ENCODE measurements at regions of chr17 and their contacts with region 1.

Region 1: GRCh38 chr17:38729886-38730525 is at the start of gene CISD3:
- DNase-seq: peak; percentile 61 to 95 (median 83)
- ATAC-seq: peak; percentile 74
- H3K4me3 ChIP-seq: peak within 1 kb of the TSS; percentile 74 to 80
- H3K4me3 Mint-ChIP-seq: peak within 1 kb of the TSS; percentile 93
- H3K27ac ChIP-seq: peak within 1 kb of the TSS; percentile 53 to 94
- H3K27ac Mint-ChIP-seq: peak within 1 kb of the TSS; percentile 97
- H3K4me1 ChIP-seq: peaks cover 74% of the 10 kb centered on the region
- H3K4me1 Mint-ChIP-seq: peaks cover 80% of the 10 kb centered on the region
- H3K27me3 ChIP-seq: no peaks in the 10 kb centered on the region
- H3K27me3 Mint-ChIP-seq: no peaks in the 10 kb centered on the region
- CTCF ChIP-seq: peak; percentile 61
- total RNA-seq, gene CISD3: 3.5 to 5.7 TPM

Region 2: DNA sequence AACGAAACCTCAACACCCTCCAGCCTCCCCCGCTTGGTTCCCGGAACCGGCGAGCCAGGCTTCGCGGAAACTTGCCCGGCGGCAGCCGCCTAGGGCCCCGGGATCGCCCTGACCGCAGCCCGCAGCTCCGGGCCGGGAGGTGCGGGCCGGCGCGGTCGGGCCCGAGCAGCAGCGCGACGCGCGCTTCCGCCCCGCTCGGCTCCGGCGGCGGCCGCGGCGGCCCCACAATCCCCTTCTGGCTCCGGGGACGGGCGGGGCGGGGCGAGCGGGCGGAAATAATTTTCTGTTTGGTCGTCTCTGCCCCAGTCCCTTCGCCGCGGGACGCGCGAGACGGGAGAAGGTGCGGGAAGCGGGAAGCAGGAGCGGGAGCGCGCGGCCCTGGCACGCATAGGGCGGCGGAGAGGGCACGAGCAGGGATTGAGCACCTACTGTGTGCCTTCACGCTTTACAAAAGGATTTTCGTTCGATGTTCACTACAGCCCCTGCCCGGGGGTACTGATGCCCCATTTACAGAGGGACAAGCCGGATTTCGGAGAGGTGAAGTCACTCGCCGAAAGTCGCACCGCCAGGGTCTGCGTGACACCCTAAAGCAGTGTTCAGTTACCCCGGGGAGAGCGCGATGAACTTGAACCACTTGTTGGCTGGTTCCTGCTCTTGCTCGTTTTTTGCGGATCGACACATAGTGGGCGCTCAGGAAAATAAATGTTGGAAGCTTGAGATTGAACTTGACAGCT is 27.7 kb before region 1 on chr17:
- CTCF ChIA-PET with region 1: interaction called, 16 read pairs
- POLR2A ChIA-PET with region 1: interaction called, 89 read pairs
- intact Hi-C with region 1: loop called (anchors 1 kb)
- DNase-seq: peak; percentile 58 to 91 (median 78)
- ATAC-seq: peak; percentile 27
- H3K4me3 ChIP-seq: peak overlapping the region; percentile 96 to 97
- H3K4me3 Mint-ChIP-seq: peak overlapping the region; percentile 99
- H3K27ac ChIP-seq: peak overlapping the region; percentile 70 to 94
- H3K27ac Mint-ChIP-seq: peak overlapping the region; percentile 97
- H3K4me1 ChIP-seq: peaks cover 33% of the 10 kb centered on the region
- H3K4me1 Mint-ChIP-seq: peaks cover 51% of the 10 kb centered on the region
- H3K27me3 ChIP-seq: no peaks in the 10 kb centered on the region
- H3K27me3 Mint-ChIP-seq: no peaks in the 10 kb centered on the region
- CTCF ChIP-seq: no peak

Region 3: GRCh38 chr17:38709864-38710603 is 20.0 kb before region 1 on chr17:
- CTCF ChIA-PET with region 1: interaction called, 16 read pairs
- POLR2A ChIA-PET with region 1: interaction called, 89 read pairs
- intact Hi-C with region 1: loop called in 1 of 2 experiments (anchors 1 kb)
- DNase-seq: no peak
- ATAC-seq: no peak
- H3K4me3 ChIP-seq: no peak overlapping the region
- H3K4me3 Mint-ChIP-seq: no peak overlapping the region
- H3K27ac ChIP-seq: no peak overlapping the region
- H3K27ac Mint-ChIP-seq: peak overlapping the region; percentile 84
- H3K4me1 ChIP-seq: peaks cover 32% of the 10 kb centered on the region
- H3K4me1 Mint-ChIP-seq: peaks cover 42% of the 10 kb centered on the region
- H3K27me3 ChIP-seq: no peaks in the 10 kb centered on the region
- H3K27me3 Mint-ChIP-seq: no peaks in the 10 kb centered on the region
- CTCF ChIP-seq: no peak

Region 4: DNA sequence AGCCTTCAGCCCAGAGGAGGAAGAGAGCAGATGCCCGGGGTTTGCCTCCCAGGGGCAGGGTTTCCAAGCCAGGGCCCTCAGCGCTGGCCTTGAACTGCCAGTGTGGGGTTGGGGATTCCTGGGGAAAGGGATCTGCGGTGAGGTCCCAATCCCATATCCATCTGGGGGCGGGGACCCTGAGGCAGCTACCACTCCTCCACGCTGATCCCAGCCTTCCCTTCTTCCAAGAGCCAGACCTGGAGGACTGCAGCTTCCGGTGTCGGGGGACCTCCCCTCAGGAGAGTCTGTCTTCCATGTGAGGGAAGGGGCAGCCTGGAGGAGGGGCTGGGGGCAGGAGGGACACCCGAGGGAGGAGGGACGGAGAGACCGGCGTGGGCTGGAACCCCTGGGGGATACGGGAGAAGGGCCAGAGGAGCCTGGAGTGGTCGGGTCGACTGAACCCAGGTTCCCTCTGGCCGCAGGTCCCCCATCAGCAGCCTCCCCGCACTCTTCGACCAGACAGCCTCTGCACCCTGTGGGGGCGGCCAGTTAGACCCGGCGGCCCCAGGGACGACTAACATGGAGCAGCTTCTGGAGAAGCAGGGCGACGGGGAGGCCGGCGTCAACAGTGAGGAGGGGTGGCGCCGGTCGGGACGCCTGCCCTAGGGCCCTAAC is 10.6 kb before region 1 on chr17:
- CTCF ChIA-PET with region 1: interaction called, 17 read pairs
- POLR2A ChIA-PET with region 1: interaction called, 17 read pairs
- intact Hi-C with region 1: no loop called
- DNase-seq: no peak
- ATAC-seq: no peak
- H3K4me3 ChIP-seq: no peak overlapping the region
- H3K4me3 Mint-ChIP-seq: no peak overlapping the region
- H3K27ac ChIP-seq: no peak overlapping the region
- H3K27ac Mint-ChIP-seq: no peak overlapping the region
- H3K4me1 ChIP-seq: peaks cover 9% of the 10 kb centered on the region
- H3K4me1 Mint-ChIP-seq: peaks cover 31% of the 10 kb centered on the region
- H3K27me3 ChIP-seq: no peaks in the 10 kb centered on the region
- H3K27me3 Mint-ChIP-seq: no peaks in the 10 kb centered on the region
- CTCF ChIP-seq: no peak

Region 5: GRCh38 chr17:38799378-38800236 is 69.6 kb after region 1 on chr17 and contains the start of gene PIP4K2B:
- CTCF ChIA-PET with region 1: interaction called, 3 read pairs
- POLR2A ChIA-PET with region 1: no interaction called
- intact Hi-C with region 1: loop called in 1 of 2 experiments (anchors 2 kb)
- DNase-seq: peak; percentile 58 to 93 (median 82)
- ATAC-seq: peak; percentile 76
- H3K4me3 ChIP-seq: peak within 1 kb of the TSS; percentile 88 to 95
- H3K4me3 Mint-ChIP-seq: peak within 1 kb of the TSS; percentile 91
- H3K27ac ChIP-seq: peak within 1 kb of the TSS; percentile 54 to 86
- H3K27ac Mint-ChIP-seq: peak within 1 kb of the TSS; percentile 90
- H3K4me1 ChIP-seq: peaks cover 31% of the 10 kb centered on the region
- H3K4me1 Mint-ChIP-seq: peaks cover 40% of the 10 kb centered on the region
- H3K27me3 ChIP-seq: no peaks in the 10 kb centered on the region
- H3K27me3 Mint-ChIP-seq: no peaks in the 10 kb centered on the region
- CTCF ChIP-seq: no peak
- total RNA-seq, gene PIP4K2B: 9.9 to 13.0 TPM

Region 6: GRCh38 chr17:38898812-38899348 is 168.9 kb after region 1 on chr17:
- CTCF ChIA-PET with region 1: no interaction called
- POLR2A ChIA-PET with region 1: no interaction called
- intact Hi-C with region 1: no loop called
- DNase-seq: peak; percentile 59 to 94 (median 88)
- ATAC-seq: peak; percentile 81
- H3K4me3 ChIP-seq: peak overlapping the region; percentile 25 to 49
- H3K4me3 Mint-ChIP-seq: peak overlapping the region; percentile 77
- H3K27ac ChIP-seq: peak overlapping the region; percentile 56 to 94
- H3K27ac Mint-ChIP-seq: peak overlapping the region; percentile 95
- H3K4me1 ChIP-seq: peaks cover 78% of the 10 kb centered on the region
- H3K4me1 Mint-ChIP-seq: peaks cover 73% of the 10 kb centered on the region
- H3K27me3 ChIP-seq: no peaks in the 10 kb centered on the region
- H3K27me3 Mint-ChIP-seq: no peaks in the 10 kb centered on the region
- CTCF ChIP-seq: no peak